HCT116 (cell line): ENCODE measurements at regions of chr14 and their contacts with region 1.

Region 1: GRCh38 chr14:95534299-95535225 is at the start of gene GLRX5:
- DNase-seq: peak; percentile 100
- ATAC-seq: peak; percentile 93
- H3K4me3 ChIP-seq: peak within 1 kb of the TSS; percentile 89 to 93
- H3K27ac ChIP-seq: peak within 1 kb of the TSS; percentile 80
- H3K4me1 ChIP-seq: peaks cover 35 to 47% of the 10 kb centered on the region in 2 experiments
- H3K27me3 ChIP-seq: no peaks in the 10 kb centered on the region
- CTCF ChIP-seq: no peak
- POLR2A ChIP-seq: peak; percentile 36
- RAD21 ChIP-seq: no peak
- total RNA-seq, gene GLRX5: 60.1 TPM

Region 2: GRCh38 chr14:95157327-95158189 is 377.0 kb before region 1 on chr14 and contains the start of gene DICER1:
- CTCF ChIA-PET with region 1: no interaction called
- POLR2A ChIA-PET with region 1: no interaction called
- RAD21 ChIA-PET with region 1: no interaction called
- intact Hi-C with region 1: loop called (anchors 10 kb)
- DNase-seq: peak; percentile 83
- ATAC-seq: peak; percentile 87
- H3K4me3 ChIP-seq: peak within 1 kb of the TSS; percentile 74 to 86
- H3K27ac ChIP-seq: peak within 1 kb of the TSS; percentile 88
- H3K4me1 ChIP-seq: peaks cover 10 to 21% of the 10 kb centered on the region in 2 experiments; a peak in 3 of 4 replicates
- H3K27me3 ChIP-seq: no peaks in the 10 kb centered on the region
- CTCF ChIP-seq: no peak
- POLR2A ChIP-seq: peak; percentile 47
- RAD21 ChIP-seq: no peak
- total RNA-seq, gene DICER1: 38.6 TPM

Region 3: GRCh38 chr14:95507701-95508103 is 26.9 kb before region 1 on chr14:
- CTCF ChIA-PET with region 1: no interaction called
- POLR2A ChIA-PET with region 1: no interaction called
- RAD21 ChIA-PET with region 1: no interaction called
- intact Hi-C with region 1: no loop called
- DNase-seq: no peak
- ATAC-seq: peak; percentile 87
- H3K4me3 ChIP-seq: no peak overlapping the region
- H3K27ac ChIP-seq: 0 out of 2 replicates have a peak overlapping the region, but pooled peaks have one; percentile 5
- H3K4me1 ChIP-seq: peaks cover 11 to 18% of the 10 kb centered on the region in 2 experiments
- H3K27me3 ChIP-seq: no peaks in the 10 kb centered on the region
- CTCF ChIP-seq: no peak
- POLR2A ChIP-seq: no peak
- RAD21 ChIP-seq: no peak

Region 4: DNA sequence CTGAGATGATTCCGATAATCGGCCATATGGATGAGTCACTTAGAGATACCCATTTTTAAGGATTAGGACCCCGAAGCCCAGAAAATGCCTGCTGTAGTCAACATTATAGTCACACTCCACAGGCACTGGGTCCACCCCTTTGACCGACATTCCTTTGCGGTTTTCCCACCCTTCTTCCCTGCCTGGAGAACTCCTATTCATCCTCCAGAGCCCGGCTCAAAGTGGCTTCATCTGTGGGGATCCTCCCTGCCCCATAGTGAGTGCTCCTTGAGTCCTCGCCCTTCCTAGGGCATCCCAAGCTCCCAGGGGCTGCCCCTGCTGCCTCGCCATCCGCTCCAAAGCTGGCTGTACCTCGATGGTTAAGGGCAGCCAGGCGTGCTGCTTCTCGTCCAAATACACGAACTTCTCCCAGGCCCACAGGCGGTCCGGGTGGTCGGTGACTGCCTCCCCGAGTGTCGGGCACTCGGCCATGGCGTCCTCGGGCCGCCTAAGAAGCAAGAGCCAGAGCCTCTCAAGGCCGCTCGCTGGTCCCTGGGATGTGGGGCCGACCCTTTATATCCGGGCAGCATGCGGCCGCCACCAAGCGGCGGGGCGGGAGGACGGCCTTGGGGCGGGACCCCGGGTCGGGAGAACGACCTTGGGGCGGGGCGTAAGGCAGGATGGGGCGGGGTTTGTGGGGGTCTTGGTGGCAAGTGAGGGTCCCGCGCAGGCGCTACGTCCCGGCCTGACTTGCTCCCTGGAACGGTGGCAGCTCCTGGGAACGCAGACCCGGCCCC is 179.2 kb after region 1 on chr14 and contains the start of gene TCL1A:
- CTCF ChIA-PET with region 1: no interaction called
- POLR2A ChIA-PET with region 1: no interaction called
- RAD21 ChIA-PET with region 1: no interaction called
- intact Hi-C with region 1: no loop called
- DNase-seq: no peak
- ATAC-seq: no peak
- H3K4me3 ChIP-seq: no peak within 1 kb of the TSS
- H3K27ac ChIP-seq: no peak within 1 kb of the TSS
- H3K4me1 ChIP-seq: no peaks in the 10 kb centered on the region
- H3K27me3 ChIP-seq: peaks cover 40% of the 10 kb centered on the region
- CTCF ChIP-seq: no peak
- POLR2A ChIP-seq: no peak
- RAD21 ChIP-seq: no peak
- total RNA-seq, gene TCL1A: 0.30 TPM